ENCODE measurements at regions of chr22 and their contacts with region 1.

Region 1: DNA sequence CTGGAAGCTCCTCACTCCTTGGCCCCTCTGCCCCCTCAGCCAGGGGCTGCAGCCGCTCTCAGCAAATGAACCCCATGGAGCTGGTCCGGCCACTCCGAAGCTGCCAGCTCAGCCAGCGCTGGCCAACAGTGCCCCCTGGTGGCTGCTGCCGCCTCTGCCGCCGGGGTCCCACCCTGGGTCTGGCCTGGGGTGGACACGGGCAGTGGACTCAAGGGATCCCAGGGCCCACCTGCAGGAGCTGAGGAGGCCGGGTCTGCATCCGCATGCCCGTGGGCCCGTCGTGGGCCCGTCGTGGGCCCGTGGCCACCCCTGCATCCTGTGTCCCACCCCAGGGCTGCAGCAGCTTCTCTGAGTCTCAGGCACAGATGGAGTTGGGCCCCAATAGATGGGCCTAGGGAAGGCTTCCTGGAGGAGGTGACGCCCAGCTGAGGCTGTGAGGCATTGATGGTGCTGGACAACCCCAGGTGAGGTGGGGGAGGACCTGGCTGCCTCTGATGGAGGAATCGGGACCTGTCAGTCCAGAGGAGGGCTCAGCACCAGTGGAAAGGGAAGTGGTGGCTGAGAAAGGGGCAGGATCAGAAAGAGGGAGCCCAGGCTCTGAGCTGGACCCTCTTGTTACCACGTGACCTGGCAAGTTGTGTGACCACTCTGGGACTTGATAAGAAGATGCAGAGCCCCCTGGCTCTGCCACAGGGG is 522.3 kb downstream of the BRD1 start:
- DNase-seq: peak; percentile 77 to 90
- ATAC-seq: peak; percentile 85
- H3K4me3 ChIP-seq: no peak overlapping the region
- H3K27ac ChIP-seq: no peak overlapping the region
- H3K4me1 ChIP-seq: no peaks in the 10 kb centered on the region
- H3K27me3 ChIP-seq: no peaks in the 10 kb centered on the region

Region 2: DNA sequence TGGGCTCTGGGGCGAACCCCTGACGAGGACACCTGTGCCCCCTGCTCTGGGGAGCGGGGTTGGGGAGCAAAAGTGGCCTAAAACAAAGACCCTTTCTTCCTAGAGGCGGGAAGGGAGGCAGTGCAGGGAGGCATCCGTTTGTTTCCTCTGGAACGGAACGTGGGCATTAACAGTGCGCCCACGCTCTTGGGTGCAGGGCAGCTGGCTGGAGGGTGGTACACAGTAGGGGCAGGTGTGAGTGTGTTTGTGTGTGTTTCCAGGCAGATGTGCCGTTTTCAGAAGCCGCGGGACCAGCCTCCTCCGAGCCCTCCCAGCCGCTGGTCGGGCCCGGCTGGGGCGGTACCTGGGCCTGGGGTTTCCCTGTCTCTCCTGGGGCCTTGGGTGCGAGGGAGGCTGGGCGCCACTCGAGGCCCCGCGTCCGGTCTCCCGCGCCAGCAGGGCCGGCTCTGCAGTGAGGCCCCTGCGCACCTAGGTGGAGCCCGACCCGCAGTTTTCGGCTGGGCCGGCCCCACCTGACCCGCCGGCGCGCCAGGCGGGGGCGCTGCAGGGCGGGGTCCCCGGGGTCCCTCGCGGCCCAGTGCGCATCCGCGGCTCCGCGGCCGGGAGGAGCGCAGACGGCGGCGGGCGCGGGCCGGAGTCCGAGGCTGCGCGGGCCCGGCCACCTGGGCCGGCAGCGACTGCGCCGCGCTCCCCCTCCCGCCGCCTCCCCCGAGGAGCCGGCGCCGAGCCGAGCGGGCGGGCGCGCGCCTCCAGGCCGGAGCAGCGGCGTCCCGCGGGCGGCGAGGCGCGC is 730.4 kb before region 1 on chr22:
- intact Hi-C with region 1: loop called (anchors 1 to 5 kb)
- DNase-seq: peak in 1 of 2 donors; percentile 64
- ATAC-seq: peak; percentile 44
- H3K4me3 ChIP-seq: peak overlapping the region; percentile 41 to 79
- H3K27ac ChIP-seq: peak overlapping the region in 1 of 2 donors; percentile 6
- H3K4me1 ChIP-seq: no peaks in the 10 kb centered on the region
- H3K27me3 ChIP-seq: no peaks in the 10 kb centered on the region

Region 3: GRCh38 chr22:48943567-48944432 is 361.6 kb before region 1 on chr22:
- intact Hi-C with region 1: loop called in 1 of 2 experiments (anchors 10 kb)
- DNase-seq: peak in 1 of 2 donors; percentile 73
- ATAC-seq: peak; percentile 62
- H3K4me3 ChIP-seq: no peak overlapping the region
- H3K27ac ChIP-seq: no peak overlapping the region
- H3K4me1 ChIP-seq: no peaks in the 10 kb centered on the region
- H3K27me3 ChIP-seq: no peaks in the 10 kb centered on the region

Region 4: GRCh38 chr22:48979482-48979881 is 325.9 kb before region 1 on chr22:
- intact Hi-C with region 1: loop called in 1 of 2 experiments (anchors 10 kb)
- DNase-seq: no peak
- ATAC-seq: no peak
- H3K4me3 ChIP-seq: no peak overlapping the region
- H3K27ac ChIP-seq: no peak overlapping the region
- H3K4me1 ChIP-seq: no peaks in the 10 kb centered on the region
- H3K27me3 ChIP-seq: no peaks in the 10 kb centered on the region

Region 5: DNA sequence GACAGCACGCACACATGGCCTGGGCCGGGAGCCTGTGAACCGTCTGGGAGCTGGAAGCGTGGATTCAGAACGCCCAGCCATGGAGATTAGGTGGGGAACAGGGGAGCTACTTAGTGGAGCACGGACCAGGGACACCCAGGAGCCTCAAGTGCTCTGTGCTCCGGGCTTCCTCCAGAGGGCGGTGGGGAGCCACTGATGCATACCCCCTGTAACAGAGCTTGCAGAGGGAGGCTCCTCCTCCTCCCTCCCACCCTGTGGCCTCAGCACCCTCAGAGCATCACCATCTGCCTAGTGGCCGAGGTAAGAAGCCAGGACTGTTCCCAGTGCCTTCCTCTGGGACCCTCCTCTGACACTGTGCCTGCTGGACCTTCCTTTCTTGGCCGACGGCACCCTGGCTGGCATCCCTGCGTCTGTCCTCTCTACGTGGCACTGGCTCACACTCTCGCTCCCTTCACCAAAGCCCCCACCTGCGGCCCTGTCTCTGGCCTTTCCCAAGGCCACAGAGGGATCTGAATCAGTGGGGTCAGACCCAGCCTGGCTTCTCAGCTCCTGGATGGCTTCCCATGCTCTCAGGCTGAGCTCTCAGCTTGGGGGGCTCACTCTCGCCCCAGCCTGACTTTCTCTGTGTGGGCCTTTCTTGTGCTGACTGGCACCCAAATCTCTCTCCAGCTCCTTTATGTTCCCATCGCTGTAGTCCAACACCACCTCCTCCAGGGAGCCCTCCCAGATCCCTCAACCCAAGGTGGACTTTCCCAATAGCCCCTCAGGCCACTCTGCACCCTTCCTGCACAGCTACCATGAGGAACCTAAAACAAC is 258.6 kb before region 1 on chr22:
- intact Hi-C with region 1: loop called in 1 of 2 experiments (anchors 2 kb)
- DNase-seq: peak; percentile 51 to 73
- ATAC-seq: no peak
- H3K4me3 ChIP-seq: no peak overlapping the region
- H3K27ac ChIP-seq: no peak overlapping the region
- H3K4me1 ChIP-seq: no peaks in the 10 kb centered on the region
- H3K27me3 ChIP-seq: no peaks in the 10 kb centered on the region

Region 6: GRCh38 chr22:49179175-49179574 is 126.2 kb before region 1 on chr22:
- intact Hi-C with region 1: no loop called
- DNase-seq: no peak
- ATAC-seq: no peak
- H3K4me3 ChIP-seq: no peak overlapping the region
- H3K27ac ChIP-seq: no peak overlapping the region
- H3K4me1 ChIP-seq: no peaks in the 10 kb centered on the region
- H3K27me3 ChIP-seq: no peaks in the 10 kb centered on the region

Region 7: GRCh38 chr22:49197505-49197904 is 107.9 kb before region 1 on chr22:
- intact Hi-C with region 1: no loop called
- DNase-seq: peak in 1 of 2 donors; percentile 67
- ATAC-seq: no peak
- H3K4me3 ChIP-seq: no peak overlapping the region
- H3K27ac ChIP-seq: no peak overlapping the region
- H3K4me1 ChIP-seq: no peaks in the 10 kb centered on the region
- H3K27me3 ChIP-seq: no peaks in the 10 kb centered on the region